ENCODE measurements at regions of chr13 and their contacts with region 1.

Region 1: DNA sequence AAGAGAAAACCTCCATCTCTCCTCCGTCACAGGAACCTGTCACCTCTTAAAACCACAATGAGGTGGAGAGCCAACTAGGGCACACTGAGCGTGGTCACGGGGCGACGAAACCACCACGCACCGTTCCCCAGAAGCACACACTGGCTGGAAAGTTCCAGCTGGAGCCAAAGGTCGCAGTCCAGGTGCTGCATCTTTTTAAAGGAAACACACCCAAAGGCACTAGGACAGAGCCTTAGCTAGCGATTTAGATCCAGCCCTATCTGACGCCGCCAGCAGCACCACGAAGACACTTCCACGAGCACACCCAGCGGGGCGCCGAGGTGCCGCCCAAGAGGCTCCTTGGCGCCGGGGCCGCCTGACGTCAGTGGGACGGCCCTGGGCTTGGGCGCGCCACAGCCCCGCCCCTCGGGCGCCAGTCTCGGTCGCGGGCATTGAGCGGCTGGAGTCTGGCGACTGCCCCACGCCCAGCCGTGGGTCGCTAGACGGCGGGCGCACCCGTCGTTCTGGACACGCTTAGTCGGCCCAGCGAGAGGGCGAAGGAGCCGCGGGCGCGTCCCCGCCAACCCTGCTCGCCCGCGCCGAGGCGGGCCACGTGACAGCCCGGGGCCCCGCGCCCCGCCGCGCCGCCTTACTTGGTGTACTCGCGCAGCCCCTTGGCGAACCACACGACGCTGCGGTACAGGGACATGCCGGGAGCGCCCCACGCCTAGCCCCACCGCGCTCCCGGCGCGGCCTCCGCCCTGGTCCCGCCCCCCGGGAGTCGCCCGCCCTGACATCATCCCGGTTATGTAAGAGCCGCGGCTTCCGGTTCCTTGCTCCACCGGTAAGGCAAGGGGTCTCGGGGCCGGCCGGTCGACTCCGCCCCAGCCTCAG is at the start of gene DHRS12:
- DNase-seq: peak; percentile 94 to 96 (median 95)
- ATAC-seq: peak; percentile 70 to 93 (median 88)
- H3K4me3 ChIP-seq: peak within 1 kb of the TSS; percentile 60 to 97 (median 78)
- H3K27ac ChIP-seq: peak within 1 kb of the TSS; percentile 97 to 100 (median 100)
- H3K4me1 ChIP-seq: peaks cover 6 to 62% (median 41%) of the 10 kb centered on the region in 12 donors
- H3K27me3 ChIP-seq: no peaks in the 10 kb centered on the region
- CTCF ChIP-seq: peak in 3 of 12 donors; percentile 6 to 27 (median 19)
- POLR2A ChIP-seq: peak in 1 of 2 donors; percentile 94
- total RNA-seq, gene DHRS12: 4.8 to 13.1 (median 12.1) TPM

Region 2: DNA sequence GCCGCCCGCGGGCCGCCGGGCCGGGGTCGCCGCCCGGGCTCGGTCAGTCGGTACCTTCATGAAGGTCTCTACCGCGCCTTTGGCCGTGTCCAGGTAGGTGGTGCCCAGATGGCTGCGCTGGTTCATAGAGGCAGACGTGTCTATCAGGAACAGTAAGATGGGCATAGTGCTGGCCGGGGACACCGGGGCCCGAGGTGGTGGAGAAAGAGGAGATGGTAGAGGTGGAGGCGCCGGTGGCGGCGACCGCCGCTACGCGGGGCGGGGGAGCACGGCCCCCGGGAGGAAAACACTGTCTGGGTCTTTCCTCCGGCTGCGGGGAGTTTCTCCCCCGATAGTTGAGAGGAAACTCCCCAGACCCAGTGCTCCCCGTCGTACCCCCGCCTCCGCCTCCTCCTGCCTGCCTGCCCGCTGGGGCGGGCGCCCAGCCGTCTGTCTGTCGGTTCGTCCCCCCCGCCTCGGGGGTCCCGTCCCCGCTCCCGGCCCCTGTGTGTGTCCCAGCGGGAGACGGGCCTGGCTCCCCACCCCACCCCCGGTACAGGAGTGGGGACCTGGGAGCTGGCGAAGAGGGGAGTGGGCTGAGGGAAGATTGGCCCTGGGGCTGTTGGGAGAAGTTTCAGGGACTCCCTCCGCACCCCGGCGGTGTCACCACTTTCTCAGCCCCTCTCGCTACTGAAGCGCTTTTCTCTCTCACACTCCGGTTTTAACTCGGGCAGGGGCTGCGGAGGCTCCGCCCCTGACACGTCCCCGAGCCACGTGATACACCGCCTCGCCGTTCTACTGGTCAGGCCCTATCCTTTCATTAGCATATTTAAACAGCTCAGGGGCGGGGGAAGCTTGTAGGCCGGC is 351.1 kb before region 1 on chr13 and contains the start of gene INTS6:
- intact Hi-C with region 1: loop called in 9 of 10 experiments (anchors 2 to 10 kb)
- DNase-seq: peak; percentile 99 to 100 (median 100)
- ATAC-seq: peak; percentile 92 to 98 (median 96)
- H3K4me3 ChIP-seq: peak within 1 kb of the TSS; percentile 83 to 99 (median 94)
- H3K27ac ChIP-seq: peak within 1 kb of the TSS; percentile 98 to 100 (median 99)
- H3K4me1 ChIP-seq: peaks cover 0 to 43% (median 21%) of the 10 kb centered on the region in 12 donors
- H3K27me3 ChIP-seq: no peaks in the 10 kb centered on the region
- CTCF ChIP-seq: no peak
- POLR2A ChIP-seq: peak; percentile 100
- total RNA-seq, gene INTS6: 18.4 to 30.2 (median 24.4) TPM

Region 3: DNA sequence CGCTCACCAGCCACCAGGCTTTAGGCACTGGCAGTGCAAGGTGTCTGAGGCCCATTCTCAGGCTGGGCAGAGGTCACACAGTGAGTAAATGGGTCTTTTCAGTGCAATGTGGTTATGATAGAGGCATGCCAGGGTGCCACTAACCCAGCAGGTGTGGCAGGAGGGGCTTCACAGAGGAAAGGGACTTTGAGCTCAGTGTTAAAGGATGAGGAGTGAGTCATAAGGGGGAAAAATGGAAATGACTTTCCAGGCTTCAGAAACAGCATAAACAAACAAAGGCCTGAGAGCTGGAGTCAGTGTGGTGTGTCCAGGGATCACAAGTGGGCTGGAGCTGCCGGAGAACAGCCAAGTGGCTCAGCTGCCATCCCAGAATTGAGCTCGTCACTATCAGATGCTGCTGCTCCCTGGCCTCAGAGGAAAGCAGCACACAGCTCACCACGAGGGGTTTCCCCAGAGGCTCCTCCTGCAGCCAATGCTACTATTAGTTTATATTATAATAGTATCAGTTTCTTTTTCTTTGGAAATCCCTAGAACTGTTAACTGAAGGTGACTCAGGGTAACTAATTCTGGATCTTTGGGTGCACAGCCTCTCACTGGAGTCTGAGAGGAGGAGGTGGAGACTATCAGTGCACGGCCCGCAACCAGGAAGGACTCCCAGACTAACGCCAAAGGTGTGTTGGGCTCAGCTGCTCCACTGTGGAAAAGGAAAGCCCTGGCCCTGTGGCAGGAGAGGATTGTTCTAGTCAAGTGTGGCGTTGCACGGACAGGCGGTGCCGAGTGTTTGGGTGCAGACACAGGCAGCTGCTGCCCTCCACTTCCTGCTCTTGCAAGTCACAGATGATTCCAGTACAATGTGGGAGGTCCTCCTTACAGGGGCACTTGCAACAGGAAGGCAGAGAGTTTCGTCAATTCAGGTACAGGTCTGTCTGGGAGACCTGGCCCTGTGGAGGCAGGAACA is 39.2 kb before region 1 on chr13:
- intact Hi-C with region 1: loop called in 1 of 10 experiments (anchors 2 kb)
- DNase-seq: peak; percentile 65 to 83 (median 72)
- ATAC-seq: peak; percentile 81 to 93 (median 86)
- H3K4me3 ChIP-seq: peak overlapping the region in 3 of 12 donors; percentile 5 to 26 (median 21)
- H3K27ac ChIP-seq: peak overlapping the region; percentile 39 to 92 (median 72)
- H3K4me1 ChIP-seq: peaks cover 0 to 35% (median 29%) of the 10 kb centered on the region in 12 donors
- H3K27me3 ChIP-seq: no peaks in the 10 kb centered on the region
- CTCF ChIP-seq: peak in 1 of 12 donors; percentile 14
- POLR2A ChIP-seq: no peak

Region 4: DNA sequence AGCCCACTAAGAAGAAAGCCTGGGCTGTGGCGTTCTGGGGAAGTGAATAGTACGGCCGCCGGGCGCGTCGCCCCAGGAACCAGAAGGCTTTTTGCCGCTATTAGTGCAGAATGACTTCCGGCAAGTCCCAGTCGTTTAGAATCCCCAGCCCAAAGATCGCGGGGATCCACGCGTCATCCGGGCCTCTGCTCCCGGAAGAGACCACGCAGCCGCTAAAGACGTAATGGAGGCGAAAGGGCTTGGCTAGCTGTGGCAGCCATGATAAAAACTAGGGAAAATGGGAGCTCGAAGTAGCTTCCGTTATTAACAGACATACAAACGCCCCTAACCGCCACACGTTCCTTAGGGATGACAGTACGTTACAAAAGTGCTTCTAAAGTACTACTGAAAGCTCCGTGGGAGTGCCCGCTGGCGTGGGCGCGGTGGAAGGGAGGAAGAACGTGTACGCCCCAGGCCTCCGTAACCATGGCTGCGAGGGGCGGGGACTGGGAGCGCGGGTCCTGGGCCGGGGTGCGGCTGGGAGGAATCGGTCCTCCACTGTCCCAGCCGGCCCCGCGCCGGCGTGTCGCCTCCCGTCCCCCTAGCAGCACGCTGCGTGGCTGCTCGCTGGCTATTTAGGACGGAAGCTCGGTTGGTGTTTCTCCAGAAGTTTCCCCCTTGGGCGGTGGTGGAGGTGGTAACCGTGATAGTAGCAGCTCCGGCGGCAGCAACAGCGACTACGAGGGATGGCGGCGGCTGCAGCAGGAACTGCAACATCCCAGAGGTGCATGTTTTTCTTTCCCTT is 848.7 kb after region 1 on chr13 and contains the start of gene SUGT1:
- intact Hi-C with region 1: loop called in 1 of 10 experiments (anchors 5 kb)
- DNase-seq: peak; percentile 98 to 99 (median 98)
- ATAC-seq: peak; percentile 99 to 100 (median 99)
- H3K4me3 ChIP-seq: peak within 1 kb of the TSS; percentile 59 to 91 (median 80)
- H3K27ac ChIP-seq: peak within 1 kb of the TSS; percentile 95 to 100 (median 99)
- H3K4me1 ChIP-seq: peaks cover 0 to 47% (median 38%) of the 10 kb centered on the region in 12 donors
- H3K27me3 ChIP-seq: no peaks in the 10 kb centered on the region
- CTCF ChIP-seq: peak; percentile 25 to 87 (median 61)
- POLR2A ChIP-seq: peak in 1 of 2 donors; percentile 61
- total RNA-seq, gene SUGT1: 32.7 to 59.2 (median 47.4) TPM

Measured in heart left ventricle (tissue), 16 donors.